CD14-positive monocyte (primary cell): ENCODE measurements at regions of chr1 and their contacts with region 1.

Region 1: DNA sequence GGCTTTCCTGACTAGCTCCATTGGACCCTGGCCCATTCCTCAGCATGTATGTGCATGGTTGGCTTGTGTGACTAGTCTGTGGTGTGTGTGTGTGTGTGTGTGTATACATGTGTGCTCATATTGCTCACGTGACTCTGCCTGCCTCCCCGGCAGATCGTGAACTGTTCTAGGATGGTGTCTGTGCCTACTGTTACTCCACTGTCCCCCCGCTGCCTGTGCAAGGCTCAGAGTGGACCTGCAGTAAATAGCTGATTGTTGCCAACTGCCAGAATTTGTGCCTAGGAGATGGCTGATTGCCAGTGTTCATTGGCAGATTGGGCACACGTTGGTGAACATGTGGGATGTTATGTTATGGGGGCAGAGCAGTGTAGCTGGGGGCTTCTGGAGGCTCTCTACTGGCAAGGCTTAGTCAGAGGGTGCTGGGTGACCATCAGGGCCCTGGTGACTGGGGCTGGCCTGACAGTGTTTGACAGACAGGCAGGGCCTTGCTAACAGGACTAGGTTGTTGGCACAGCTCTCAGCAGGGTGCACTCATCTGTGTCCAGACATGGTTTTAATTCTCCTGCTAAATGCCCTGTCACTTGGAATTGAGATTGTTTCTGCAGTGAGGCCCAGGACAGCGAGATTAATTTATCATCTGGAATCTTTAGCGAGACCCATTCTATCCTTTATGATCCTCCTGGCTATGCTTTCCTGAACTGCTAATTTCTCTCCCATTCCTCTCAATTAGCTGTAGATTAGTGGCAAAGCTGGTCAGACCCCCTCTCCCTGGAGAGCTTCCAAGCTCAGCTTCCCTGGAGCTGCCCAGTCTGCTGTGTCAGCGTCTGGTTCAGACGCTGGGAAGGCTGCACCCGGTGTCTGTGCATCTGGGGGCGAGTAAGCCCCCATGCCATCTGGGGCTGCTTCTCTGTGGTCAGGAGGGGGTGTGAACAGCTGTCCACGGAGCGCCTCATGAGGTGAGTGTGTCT is 20.8 kb downstream of the SLC6A17 start:
- DNase-seq: no peak
- H3K4me3 ChIP-seq: no peak overlapping the region
- H3K4me3 Mint-ChIP-seq: no peak overlapping the region
- H3K27ac ChIP-seq: no peak overlapping the region
- H3K27ac Mint-ChIP-seq: no peak overlapping the region
- H3K4me1 ChIP-seq: no peaks in the 10 kb centered on the region
- H3K4me1 Mint-ChIP-seq: no peaks in the 10 kb centered on the region
- H3K27me3 ChIP-seq: no peaks in the 10 kb centered on the region
- H3K27me3 Mint-ChIP-seq: peaks cover 11 to 13% (median 12%) of the 10 kb centered on the region in 3 donors
- CTCF ChIP-seq: no peak

Region 2: GRCh38 chr1:109282952-109283747 is 887.9 kb before region 1 on chr1 and contains the start of gene PSRC1:
- intact Hi-C with region 1: no loop called
- DNase-seq: peak; percentile 79 to 86 (median 81)
- H3K4me3 ChIP-seq: peak within 1 kb of the TSS; percentile 61 to 87 (median 77)
- H3K4me3 Mint-ChIP-seq: peak within 1 kb of the TSS; percentile 97 to 100
- H3K27ac ChIP-seq: peak within 1 kb of the TSS; percentile 82 to 85
- H3K27ac Mint-ChIP-seq: peak within 1 kb of the TSS; percentile 87 to 97 (median 95)
- H3K4me1 ChIP-seq: peaks cover 39 to 42% of the 10 kb centered on the region in 2 donors
- H3K4me1 Mint-ChIP-seq: peaks cover 42% of the 10 kb centered on the region
- H3K27me3 ChIP-seq: no peaks in the 10 kb centered on the region
- H3K27me3 Mint-ChIP-seq: no peaks in the 10 kb centered on the region
- CTCF ChIP-seq: peak; percentile 71
- polyA plus RNA-seq, gene PSRC1: 5.8 to 25.5 (median 7.1) TPM

Region 3: GRCh38 chr1:110224240-110224995 is 53.4 kb after region 1 on chr1:
- intact Hi-C with region 1: loop called in 1 of 2 experiments (anchors 5 kb)
- DNase-seq: no peak
- H3K4me3 ChIP-seq: no peak overlapping the region
- H3K4me3 Mint-ChIP-seq: no peak overlapping the region
- H3K27ac ChIP-seq: no peak overlapping the region
- H3K27ac Mint-ChIP-seq: peak overlapping the region in 1 of 7 donors; percentile 31
- H3K4me1 ChIP-seq: peaks cover 0 to 1% of the 10 kb centered on the region in 2 donors
- H3K4me1 Mint-ChIP-seq: peaks cover 2% of the 10 kb centered on the region
- H3K27me3 ChIP-seq: no peaks in the 10 kb centered on the region
- H3K27me3 Mint-ChIP-seq: peaks cover 2 to 7% (median 3%) of the 10 kb centered on the region in 3 donors
- CTCF ChIP-seq: no peak